Heart left ventricle (tissue), 16 donors: ENCODE measurements at regions of chr7 and their contacts with region 1.

Region 1: GRCh38 chr7:52447581-52448180 is 587.8 kb upstream of the POM121L12 start:
- DNase-seq: no peak
- ATAC-seq: no peak
- H3K4me3 ChIP-seq: no peak overlapping the region
- H3K27ac ChIP-seq: no peak overlapping the region
- H3K4me1 ChIP-seq: no peaks in the 10 kb centered on the region
- H3K27me3 ChIP-seq: no peaks in the 10 kb centered on the region
- CTCF ChIP-seq: no peak
- POLR2A ChIP-seq: no peak

Region 2: DNA sequence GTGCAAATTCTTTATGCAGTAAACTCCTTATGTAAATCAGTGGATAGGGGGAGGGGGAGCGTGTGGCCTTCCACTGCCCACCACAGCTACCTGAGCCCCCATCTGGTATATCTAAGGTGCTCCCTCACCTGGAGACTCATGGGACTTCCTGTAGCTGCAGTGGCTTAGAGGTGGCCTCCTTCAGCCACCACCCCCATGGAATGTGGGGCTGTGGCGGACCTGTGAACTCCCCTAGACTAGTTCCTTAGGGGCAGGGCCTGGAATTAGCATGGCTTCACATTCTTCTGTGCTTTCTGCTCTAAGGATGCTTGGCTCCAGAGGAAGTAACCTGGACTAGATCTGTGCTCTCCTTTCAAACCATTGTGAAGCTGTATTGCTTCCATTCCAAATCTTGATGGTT is 580.6 kb before region 1 on chr7:
- intact Hi-C with region 1: no loop called
- DNase-seq: no peak
- ATAC-seq: no peak
- H3K4me3 ChIP-seq: no peak overlapping the region
- H3K27ac ChIP-seq: no peak overlapping the region
- H3K4me1 ChIP-seq: no peaks in the 10 kb centered on the region
- H3K27me3 ChIP-seq: no peaks in the 10 kb centered on the region
- CTCF ChIP-seq: no peak
- POLR2A ChIP-seq: no peak

Region 3: GRCh38 chr7:52079726-52080125 is 368.0 kb before region 1 on chr7:
- intact Hi-C with region 1: no loop called
- DNase-seq: no peak
- ATAC-seq: no peak
- H3K4me3 ChIP-seq: no peak overlapping the region
- H3K27ac ChIP-seq: no peak overlapping the region
- H3K4me1 ChIP-seq: no peaks in the 10 kb centered on the region
- H3K27me3 ChIP-seq: no peaks in the 10 kb centered on the region
- CTCF ChIP-seq: no peak
- POLR2A ChIP-seq: no peak

Region 4: GRCh38 chr7:52382731-52383130 is 65.0 kb before region 1 on chr7:
- intact Hi-C with region 1: loop called in 1 of 10 experiments (anchors 10 kb)
- DNase-seq: no peak
- ATAC-seq: no peak
- H3K4me3 ChIP-seq: no peak overlapping the region
- H3K27ac ChIP-seq: no peak overlapping the region
- H3K4me1 ChIP-seq: no peaks in the 10 kb centered on the region
- H3K27me3 ChIP-seq: no peaks in the 10 kb centered on the region
- CTCF ChIP-seq: no peak
- POLR2A ChIP-seq: no peak